ENCODE measurements at regions of chr2 and their contacts with region 1.

Region 1: DNA sequence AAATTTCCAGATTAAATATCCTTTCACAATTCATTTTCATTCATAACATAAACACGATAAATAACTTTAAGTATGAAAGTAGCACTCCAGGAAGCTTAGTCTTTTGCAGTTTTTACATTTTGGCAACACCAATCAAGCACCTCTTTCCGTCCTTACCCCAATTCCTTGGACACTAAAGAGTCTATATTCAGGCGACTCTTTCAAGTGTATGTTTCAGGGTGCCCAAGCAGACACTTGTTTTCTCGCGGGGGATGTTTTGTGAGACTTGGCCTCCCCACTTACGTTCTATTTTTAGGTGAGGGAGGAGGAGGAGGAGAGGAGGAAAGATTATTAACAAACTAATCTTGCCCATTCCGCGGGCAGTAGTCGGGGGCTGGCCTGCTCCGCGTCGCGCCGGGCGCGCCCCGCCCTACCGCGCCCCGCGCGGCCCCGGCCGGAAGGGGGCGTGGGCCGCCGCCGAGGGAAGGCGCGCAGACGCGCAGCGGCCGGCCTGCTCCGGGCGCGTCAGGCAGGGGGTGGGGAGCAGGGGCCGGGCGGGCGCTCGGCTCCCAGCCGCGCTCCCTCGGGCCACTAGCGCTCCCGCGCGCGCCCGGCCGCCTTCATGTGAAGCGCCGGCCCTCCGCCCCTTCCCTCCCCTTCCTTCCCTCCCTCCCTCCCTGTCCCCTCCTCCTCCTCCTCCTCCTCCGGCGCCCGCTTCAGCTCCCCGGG is at the start of gene ITPRID2:
- DNase-seq: peak; percentile 89 to 90
- ATAC-seq: peak; percentile 93 to 98 (median 96)
- H3K4me3 ChIP-seq: peak within 1 kb of the TSS; percentile 51 to 92 (median 88)
- H3K27ac ChIP-seq: peak within 1 kb of the TSS; percentile 80 to 99 (median 98)
- H3K4me1 ChIP-seq: peaks cover 0 to 53% (median 44%) of the 10 kb centered on the region in 9 donors
- H3K27me3 ChIP-seq: no peaks in the 10 kb centered on the region
- CTCF ChIP-seq: peak in 4 of 9 donors; percentile 7 to 40 (median 38)
- total RNA-seq, gene ITPRID2: 49.5 to 86.6 (median 67.9) TPM

Region 2: GRCh38 chr2:180980106-180980942 is 911.1 kb before region 1 on chr2 and contains the start of gene UBE2E3:
- intact Hi-C with region 1: loop called in 1 of 10 experiments (anchors 5 kb)
- DNase-seq: peak; percentile 82 to 84
- ATAC-seq: peak; percentile 84 to 98 (median 92)
- H3K4me3 ChIP-seq: peak within 1 kb of the TSS; percentile 62 to 85 (median 72)
- H3K27ac ChIP-seq: peak within 1 kb of the TSS; percentile 65 to 96 (median 86)
- H3K4me1 ChIP-seq: peaks cover 3 to 48% (median 38%) of the 10 kb centered on the region in 9 donors
- H3K27me3 ChIP-seq: no peaks in the 10 kb centered on the region
- CTCF ChIP-seq: peak; percentile 49 to 78 (median 60)
- total RNA-seq, gene UBE2E3: 41.9 to 59.1 (median 54.9) TPM

Region 3: DNA sequence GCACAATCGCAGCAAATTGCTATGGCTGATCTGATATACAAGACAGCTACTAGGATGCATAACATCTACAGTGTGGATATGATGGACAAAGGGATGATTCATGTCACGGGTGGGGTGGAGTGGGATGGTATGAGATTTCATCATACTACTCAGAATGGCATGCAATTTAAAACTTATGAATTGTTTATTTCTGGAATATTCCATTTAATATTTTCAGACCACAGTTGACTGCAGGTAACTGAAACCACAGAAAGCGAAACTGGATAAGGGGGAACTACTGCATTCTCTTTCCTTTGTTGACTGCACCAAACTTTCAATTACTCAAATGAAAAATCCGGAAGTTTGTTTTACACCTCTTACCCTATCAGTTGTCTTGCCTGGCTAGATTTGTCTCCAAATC is 116.7 kb before region 1 on chr2:
- intact Hi-C with region 1: loop called in 1 of 10 experiments (anchors 10 kb)
- DNase-seq: no peak
- ATAC-seq: no peak
- H3K4me3 ChIP-seq: no peak overlapping the region
- H3K27ac ChIP-seq: no peak overlapping the region
- H3K4me1 ChIP-seq: peaks cover 0 to 18% (median 5%) of the 10 kb centered on the region in 9 donors
- H3K27me3 ChIP-seq: no peaks in the 10 kb centered on the region
- CTCF ChIP-seq: no peak

Region 4: GRCh38 chr2:181850936-181851560 is 40.4 kb before region 1 on chr2:
- intact Hi-C with region 1: no loop called
- DNase-seq: no peak
- ATAC-seq: no peak
- H3K4me3 ChIP-seq: no peak overlapping the region
- H3K27ac ChIP-seq: no peak overlapping the region
- H3K4me1 ChIP-seq: peaks cover 0 to 45% (median 21%) of the 10 kb centered on the region in 9 donors
- H3K27me3 ChIP-seq: no peaks in the 10 kb centered on the region
- CTCF ChIP-seq: no peak

Region 5: DNA sequence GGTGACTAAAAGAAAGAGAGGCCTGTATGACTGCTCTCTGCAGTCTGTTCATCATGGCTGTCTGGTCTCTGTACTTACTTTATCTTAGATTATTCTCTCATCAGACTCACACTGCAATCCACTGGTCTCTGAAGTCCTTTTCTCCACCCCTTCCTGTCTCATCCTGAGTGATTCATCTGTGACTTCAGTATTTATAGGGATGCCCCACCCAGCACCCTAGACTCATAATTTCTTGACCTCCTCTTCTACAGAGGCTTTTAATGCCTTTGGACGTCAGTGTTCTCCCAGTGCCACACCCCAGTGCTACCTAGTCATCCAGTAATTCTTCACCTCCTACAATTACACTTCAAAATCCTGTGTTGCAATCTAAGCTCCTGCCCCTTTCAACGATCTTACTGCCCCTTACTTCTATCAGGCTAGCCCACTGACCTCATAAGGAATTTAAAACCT is 14.8 kb before region 1 on chr2:
- intact Hi-C with region 1: no loop called
- DNase-seq: no peak
- ATAC-seq: peak in 2 of 8 donors; percentile 38 to 57
- H3K4me3 ChIP-seq: no peak overlapping the region
- H3K27ac ChIP-seq: no peak overlapping the region
- H3K4me1 ChIP-seq: peaks cover 0 to 8% (median 0%) of the 10 kb centered on the region in 9 donors
- H3K27me3 ChIP-seq: no peaks in the 10 kb centered on the region
- CTCF ChIP-seq: no peak

Region 6: DNA sequence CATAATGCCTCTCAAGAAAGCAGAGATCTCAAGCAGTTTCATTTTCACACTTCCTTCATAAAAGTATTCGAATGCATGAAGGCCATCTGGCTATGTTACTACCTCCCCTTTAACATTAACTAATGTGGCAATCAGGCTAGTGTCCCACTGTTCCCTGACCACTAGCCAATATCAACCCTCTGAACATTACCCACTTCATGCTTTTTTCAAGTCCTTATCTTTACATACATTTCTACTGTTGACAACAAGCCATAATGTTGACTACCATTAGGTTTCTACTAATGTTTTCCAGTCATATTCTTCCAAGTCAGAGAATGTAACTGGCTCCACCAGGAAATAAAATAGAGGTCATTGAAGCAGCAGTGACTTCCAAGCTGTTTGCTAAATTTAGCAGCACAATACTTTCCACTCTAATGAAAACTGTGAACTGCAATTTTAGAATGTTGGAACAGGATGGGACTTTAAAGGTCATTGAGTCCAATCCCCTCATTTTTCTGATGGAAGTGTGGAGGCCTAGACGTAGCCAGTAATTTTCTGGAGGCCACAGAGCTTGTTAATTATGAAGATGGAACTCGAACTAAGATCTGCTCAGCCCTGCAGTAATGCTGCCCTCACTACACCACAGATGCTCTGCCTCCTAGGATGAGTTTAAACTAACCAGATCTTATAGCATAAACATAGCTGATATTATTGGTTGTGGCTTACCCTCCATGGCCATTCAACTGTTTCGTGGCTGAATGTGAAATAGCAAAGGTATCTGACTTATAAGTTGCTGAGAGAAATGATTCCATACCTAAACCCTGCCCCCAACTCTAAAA is 93.6 kb after region 1 on chr2:
- intact Hi-C with region 1: no loop called
- DNase-seq: no peak
- ATAC-seq: peak; percentile 55 to 78 (median 70)
- H3K4me3 ChIP-seq: peak overlapping the region in 6 of 10 donors; percentile 19 to 47 (median 44)
- H3K27ac ChIP-seq: peak overlapping the region; percentile 11 to 87 (median 76)
- H3K4me1 ChIP-seq: peaks cover 0 to 32% (median 16%) of the 10 kb centered on the region in 9 donors
- H3K27me3 ChIP-seq: no peaks in the 10 kb centered on the region
- CTCF ChIP-seq: no peak

Region 7: DNA sequence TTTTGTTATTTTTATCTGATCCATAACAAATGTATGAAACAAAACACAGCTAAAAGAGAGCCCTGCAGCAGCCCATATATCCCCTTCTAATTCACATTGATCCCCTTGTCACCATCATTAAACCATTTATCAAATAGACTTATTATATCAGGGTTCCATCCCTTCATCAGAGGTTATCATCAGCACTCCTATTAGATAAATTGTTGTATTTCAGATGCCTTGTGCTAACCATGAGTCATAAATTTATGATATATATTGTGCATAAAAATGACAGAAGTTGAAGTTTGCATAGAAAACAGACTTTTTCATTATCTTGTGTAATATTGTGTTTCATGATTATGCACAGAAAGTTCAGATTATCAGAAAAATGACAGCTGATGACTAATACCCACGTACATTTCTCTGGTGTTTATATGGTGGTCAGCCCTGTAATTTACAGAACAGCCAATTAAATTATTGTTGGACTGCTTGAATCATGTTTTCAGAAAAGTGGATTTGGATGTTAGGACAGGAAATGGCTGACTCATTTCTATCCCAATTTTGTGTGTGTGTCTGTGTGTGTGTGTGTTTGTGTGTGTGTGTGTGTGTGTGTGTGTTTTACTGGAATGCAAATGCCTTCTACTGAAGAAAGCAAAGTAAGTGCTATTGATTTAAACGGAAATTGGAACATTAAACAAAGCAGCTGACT is 175.1 kb after region 1 on chr2:
- intact Hi-C with region 1: loop called in 3 of 10 experiments (anchors 10 kb)
- DNase-seq: no peak
- ATAC-seq: peak in 1 of 8 donors; percentile 42
- H3K4me3 ChIP-seq: no peak overlapping the region
- H3K27ac ChIP-seq: peak overlapping the region in 2 of 10 donors; percentile 9 to 12
- H3K4me1 ChIP-seq: peaks cover 3 to 41% (median 24%) of the 10 kb centered on the region in 9 donors
- H3K27me3 ChIP-seq: no peaks in the 10 kb centered on the region
- CTCF ChIP-seq: no peak

Region 8: GRCh38 chr2:182088681-182089320 is 197.4 kb after region 1 on chr2:
- intact Hi-C with region 1: loop called in 1 of 10 experiments (anchors 10 kb)
- DNase-seq: no peak
- ATAC-seq: peak in 6 of 8 donors; percentile 28 to 55 (median 48)
- H3K4me3 ChIP-seq: no peak overlapping the region
- H3K27ac ChIP-seq: peak overlapping the region in 1 of 10 donors; percentile 15
- H3K4me1 ChIP-seq: peaks cover 0 to 33% (median 9%) of the 10 kb centered on the region in 9 donors
- H3K27me3 ChIP-seq: no peaks in the 10 kb centered on the region
- CTCF ChIP-seq: no peak